H1 (cell line): ENCODE measurements at regions of chr11 and their contacts with region 1.

Region 1: GRCh38 chr11:62419314-62419929 is 589 bp downstream of the SCGB1A1 start:
- DNase-seq: no peak
- H3K4me3 ChIP-seq: no peak overlapping the region
- H3K27ac ChIP-seq: no peak overlapping the region
- H3K4me1 ChIP-seq: no peaks in the 10 kb centered on the region
- H3K27me3 ChIP-seq: peaks cover 0 to 12% (median 9%) of the 10 kb centered on the region in 4 experiments; a peak in 6 of 7 replicates
- CTCF ChIP-seq: no peak
- EP300 ChIP-seq: no peak
- POLR2A ChIP-seq: no peak
- RAD21 ChIP-seq: no peak

Region 2: DNA sequence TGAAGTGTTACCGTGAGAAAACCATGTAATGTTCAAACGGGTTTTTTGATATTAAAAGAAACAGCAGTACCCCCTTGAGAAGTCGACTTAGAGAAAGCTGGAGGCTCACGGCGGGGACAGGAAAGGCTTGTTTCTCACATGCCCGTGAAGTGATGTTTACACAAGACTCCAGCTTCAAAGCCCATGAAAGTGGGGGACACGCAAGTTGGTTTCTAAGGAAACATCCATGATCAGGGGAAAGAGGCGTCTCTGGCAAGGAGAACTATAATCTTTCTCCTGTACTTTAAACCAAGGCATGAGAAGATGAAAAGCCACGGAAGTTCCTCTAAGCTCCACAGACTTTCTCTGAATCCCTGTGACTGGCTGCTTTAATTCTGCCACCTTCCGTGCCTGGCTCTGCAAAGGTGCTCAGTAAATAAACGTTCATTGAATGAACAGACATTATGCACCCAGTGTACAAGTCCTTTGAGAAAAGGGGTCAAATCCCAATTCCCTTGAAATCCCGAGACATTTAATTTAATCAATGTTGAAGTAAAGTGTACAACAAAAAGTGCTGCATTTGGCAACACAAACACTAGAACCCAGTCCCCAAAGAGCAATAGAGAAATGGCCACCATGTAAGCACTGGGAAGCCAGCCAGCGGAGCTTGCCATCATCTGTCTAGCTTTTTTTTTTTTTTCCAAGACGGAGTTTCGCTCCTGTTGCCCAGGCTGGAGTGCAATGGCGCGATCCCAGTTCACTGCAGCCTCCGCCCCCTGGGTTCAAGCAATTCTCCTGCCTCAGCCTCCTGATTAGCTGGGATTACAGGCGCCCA is 68.5 kb after region 1 on chr11:
- CTCF ChIA-PET with region 1: interaction called, 24 read pairs
- POLR2A ChIA-PET with region 1: no interaction called
- DNase-seq: no peak
- H3K4me3 ChIP-seq: no peak overlapping the region
- H3K27ac ChIP-seq: no peak overlapping the region
- H3K4me1 ChIP-seq: no peaks in the 10 kb centered on the region; a peak in 1 of 7 replicates
- H3K27me3 ChIP-seq: no peaks in the 10 kb centered on the region; a peak in 1 of 7 replicates
- CTCF ChIP-seq: no peak
- EP300 ChIP-seq: no peak
- POLR2A ChIP-seq: no peak
- RAD21 ChIP-seq: no peak

Region 3: GRCh38 chr11:62567018-62567633 is 147.7 kb after region 1 on chr11:
- CTCF ChIA-PET with region 1: interaction called, 85 read pairs
- POLR2A ChIA-PET with region 1: interaction called, 19 read pairs
- DNase-seq: no peak
- H3K4me3 ChIP-seq: no peak overlapping the region
- H3K27ac ChIP-seq: no peak overlapping the region
- H3K4me1 ChIP-seq: peaks cover 2 to 6% (median 2%) of the 10 kb centered on the region in 4 experiments; a peak in 3 of 7 replicates
- H3K27me3 ChIP-seq: no peaks in the 10 kb centered on the region
- CTCF ChIP-seq: no peak
- EP300 ChIP-seq: no peak
- POLR2A ChIP-seq: no peak
- RAD21 ChIP-seq: no peak